ENCODE measurements at regions of chr5 and their contacts with region 1.

Region 1: GRCh38 chr5:35884115-35884788 is 27.6 kb downstream of the IL7R start:
- DNase-seq: no peak
- H3K4me3 ChIP-seq: no peak overlapping the region
- H3K4me3 Mint-ChIP-seq: peak overlapping the region in 2 of 8 donors; percentile 16 to 17
- H3K27ac ChIP-seq: no peak overlapping the region
- H3K27ac Mint-ChIP-seq: peak overlapping the region in 6 of 7 donors; percentile 9 to 61 (median 36)
- H3K4me1 ChIP-seq: peaks cover 33% of the 10 kb centered on the region
- H3K4me1 Mint-ChIP-seq: peaks cover 32 to 49% (median 39%) of the 10 kb centered on the region in 4 donors
- H3K27me3 ChIP-seq: no peaks in the 10 kb centered on the region
- H3K27me3 Mint-ChIP-seq: no peaks in the 10 kb centered on the region

Region 2: DNA sequence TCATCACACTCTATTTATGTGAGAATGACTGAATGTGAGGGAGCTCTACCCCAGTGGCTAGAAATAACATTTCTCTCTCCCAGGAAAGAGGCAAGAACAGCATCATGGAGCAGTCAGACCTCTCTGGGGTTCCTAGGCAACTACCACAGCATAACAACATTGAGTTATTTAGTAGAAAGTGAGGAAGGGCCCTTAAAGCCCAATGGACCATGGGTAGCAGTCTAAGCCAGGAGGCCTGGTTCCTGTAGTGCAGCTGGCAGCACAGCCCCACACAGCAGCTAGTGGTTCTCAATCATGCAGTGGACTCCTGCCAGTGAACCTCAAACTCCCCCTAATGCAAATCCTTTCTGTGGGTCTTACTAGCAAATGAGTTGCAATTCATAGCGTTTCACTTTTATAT is 211.3 kb before region 1 on chr5:
- CTCF ChIA-PET with region 1: no interaction called
- POLR2A ChIA-PET with region 1: interaction called, 36 read pairs
- intact Hi-C with region 1: no loop called
- DNase-seq: peak; percentile 32 to 63 (median 54)
- H3K4me3 ChIP-seq: no peak overlapping the region
- H3K4me3 Mint-ChIP-seq: peak overlapping the region in 7 of 8 donors; percentile 31 to 76 (median 47)
- H3K27ac ChIP-seq: peak overlapping the region; percentile 7
- H3K27ac Mint-ChIP-seq: peak overlapping the region; percentile 68 to 92 (median 86)
- H3K4me1 ChIP-seq: peaks cover 58% of the 10 kb centered on the region
- H3K4me1 Mint-ChIP-seq: peaks cover 43 to 68% (median 54%) of the 10 kb centered on the region in 4 donors
- H3K27me3 ChIP-seq: no peaks in the 10 kb centered on the region
- H3K27me3 Mint-ChIP-seq: no peaks in the 10 kb centered on the region

Region 3: GRCh38 chr5:35794684-35795375 is 89.4 kb before region 1 on chr5:
- CTCF ChIA-PET with region 1: no interaction called
- POLR2A ChIA-PET with region 1: interaction called, 52 read pairs
- intact Hi-C with region 1: no loop called
- DNase-seq: no peak
- H3K4me3 ChIP-seq: peak overlapping the region in 1 of 2 donors; percentile 22
- H3K4me3 Mint-ChIP-seq: peak overlapping the region; percentile 33 to 89 (median 60)
- H3K27ac ChIP-seq: peak overlapping the region; percentile 12
- H3K27ac Mint-ChIP-seq: peak overlapping the region; percentile 84 to 97 (median 89)
- H3K4me1 ChIP-seq: peaks cover 88% of the 10 kb centered on the region
- H3K4me1 Mint-ChIP-seq: peaks cover 57 to 92% (median 78%) of the 10 kb centered on the region in 4 donors
- H3K27me3 ChIP-seq: no peaks in the 10 kb centered on the region
- H3K27me3 Mint-ChIP-seq: no peaks in the 10 kb centered on the region

Region 4: DNA sequence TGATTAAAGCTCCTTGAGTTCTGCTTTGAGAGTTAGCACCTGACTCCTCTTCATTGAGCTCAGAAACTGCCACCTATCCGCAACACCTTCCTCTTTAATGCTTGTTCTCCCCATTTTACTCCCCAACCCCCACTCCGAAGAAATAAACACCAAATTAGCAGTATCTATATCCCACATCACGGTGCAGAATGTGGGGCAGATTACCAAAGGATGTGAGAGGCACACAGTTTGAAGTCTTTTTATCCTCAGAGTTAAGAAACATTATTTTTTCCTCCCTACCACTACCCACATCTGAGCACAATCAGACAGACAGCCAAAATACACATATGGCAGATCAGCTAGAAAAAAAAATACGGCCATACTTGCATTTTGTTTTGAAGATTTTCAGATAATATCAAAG is 53.7 kb before region 1 on chr5:
- CTCF ChIA-PET with region 1: interaction called, 3 read pairs
- POLR2A ChIA-PET with region 1: interaction called, 238 read pairs
- intact Hi-C with region 1: no loop called
- DNase-seq: peak; percentile 80 to 90 (median 85)
- H3K4me3 ChIP-seq: peak overlapping the region in 1 of 2 donors; percentile 41
- H3K4me3 Mint-ChIP-seq: peak overlapping the region; percentile 21 to 72 (median 56)
- H3K27ac ChIP-seq: peak overlapping the region; percentile 45
- H3K27ac Mint-ChIP-seq: peak overlapping the region; percentile 57 to 99 (median 84)
- H3K4me1 ChIP-seq: peaks cover 97% of the 10 kb centered on the region
- H3K4me1 Mint-ChIP-seq: peaks cover 67 to 96% (median 88%) of the 10 kb centered on the region in 4 donors
- H3K27me3 ChIP-seq: no peaks in the 10 kb centered on the region
- H3K27me3 Mint-ChIP-seq: no peaks in the 10 kb centered on the region

Region 5: GRCh38 chr5:35902046-35902676 is 17.9 kb after region 1 on chr5:
- CTCF ChIA-PET with region 1: interaction called, 3 read pairs
- POLR2A ChIA-PET with region 1: interaction called, 92 read pairs
- intact Hi-C with region 1: loop called (anchors 2 kb)
- DNase-seq: peak in 2 of 5 donors; percentile 12 to 14
- H3K4me3 ChIP-seq: no peak overlapping the region
- H3K4me3 Mint-ChIP-seq: peak overlapping the region in 2 of 8 donors; percentile 1 to 21
- H3K27ac ChIP-seq: no peak overlapping the region
- H3K27ac Mint-ChIP-seq: peak overlapping the region in 5 of 7 donors; percentile 29 to 62 (median 50)
- H3K4me1 ChIP-seq: peaks cover 42% of the 10 kb centered on the region
- H3K4me1 Mint-ChIP-seq: peaks cover 24 to 63% (median 49%) of the 10 kb centered on the region in 4 donors
- H3K27me3 ChIP-seq: no peaks in the 10 kb centered on the region
- H3K27me3 Mint-ChIP-seq: no peaks in the 10 kb centered on the region

Measured in CD4-positive, alpha-beta memory T cell (primary cell).